ENCODE measurements at regions of chr1 and their contacts with region 1.

Region 1: DNA sequence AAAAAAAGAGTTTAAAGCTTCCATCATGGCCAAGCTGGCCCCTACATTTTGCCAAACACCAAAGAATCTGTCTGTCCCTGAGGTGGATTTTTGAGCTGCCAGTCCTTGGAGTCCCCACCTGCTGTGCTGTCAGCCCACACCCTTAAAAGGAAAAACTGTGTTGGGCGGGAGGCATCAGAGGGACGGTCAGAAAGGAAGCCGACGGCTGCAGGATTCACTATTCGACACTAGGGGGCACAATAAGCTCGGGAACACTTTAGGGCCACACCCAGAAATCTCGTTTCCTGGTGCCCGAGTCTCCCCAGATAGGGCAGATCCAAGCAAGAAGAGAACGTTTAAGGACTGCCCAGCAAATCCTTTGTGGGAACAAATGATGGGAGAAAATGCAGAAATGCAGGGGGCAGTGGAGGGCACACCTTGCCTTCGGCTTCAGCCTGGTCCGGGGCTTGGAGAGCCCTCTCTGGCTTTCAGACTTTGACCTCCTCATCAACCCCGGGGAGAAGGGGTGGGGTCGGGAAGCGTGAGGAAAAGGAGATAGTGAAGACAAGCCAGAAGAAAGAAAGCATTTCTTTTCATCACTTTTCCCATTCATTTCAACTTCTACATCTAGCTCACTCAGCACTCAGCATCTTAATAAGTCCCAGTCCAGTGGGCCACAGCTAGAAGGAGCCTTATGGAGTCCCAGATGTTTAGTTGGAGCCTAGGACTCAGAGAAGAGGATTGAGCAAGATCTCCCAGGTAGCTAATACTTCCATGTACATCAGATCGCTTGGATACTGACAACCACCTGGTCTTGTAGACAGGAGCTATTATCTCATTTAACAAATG is 5.0 kb upstream of the CTTNBP2NL start:
- DNase-seq: peak; percentile 91
- ATAC-seq: peak; percentile 88
- H3K4me3 Mint-ChIP-seq: peak overlapping the region; percentile 80
- H3K27ac Mint-ChIP-seq: no peak overlapping the region; the same call in 1 of the 2 replicates
- H3K4me1 Mint-ChIP-seq: peaks cover 38% of the 10 kb centered on the region
- H3K27me3 Mint-ChIP-seq: no peaks in the 10 kb centered on the region
- CTCF ChIP-seq: peak; percentile 87

Region 2: GRCh38 chr1:112346801-112347350 is 44.1 kb before region 1 on chr1:
- CTCF ChIA-PET with region 1: no interaction called
- POLR2A ChIA-PET with region 1: no interaction called
- DNase-seq: no peak
- ATAC-seq: no peak
- H3K4me3 Mint-ChIP-seq: no peak overlapping the region
- H3K27ac Mint-ChIP-seq: no peak overlapping the region
- H3K4me1 Mint-ChIP-seq: no peaks in the 10 kb centered on the region
- H3K27me3 Mint-ChIP-seq: no peaks in the 10 kb centered on the region; the same call in 1 of the 2 replicates
- CTCF ChIP-seq: no peak

Region 3: DNA sequence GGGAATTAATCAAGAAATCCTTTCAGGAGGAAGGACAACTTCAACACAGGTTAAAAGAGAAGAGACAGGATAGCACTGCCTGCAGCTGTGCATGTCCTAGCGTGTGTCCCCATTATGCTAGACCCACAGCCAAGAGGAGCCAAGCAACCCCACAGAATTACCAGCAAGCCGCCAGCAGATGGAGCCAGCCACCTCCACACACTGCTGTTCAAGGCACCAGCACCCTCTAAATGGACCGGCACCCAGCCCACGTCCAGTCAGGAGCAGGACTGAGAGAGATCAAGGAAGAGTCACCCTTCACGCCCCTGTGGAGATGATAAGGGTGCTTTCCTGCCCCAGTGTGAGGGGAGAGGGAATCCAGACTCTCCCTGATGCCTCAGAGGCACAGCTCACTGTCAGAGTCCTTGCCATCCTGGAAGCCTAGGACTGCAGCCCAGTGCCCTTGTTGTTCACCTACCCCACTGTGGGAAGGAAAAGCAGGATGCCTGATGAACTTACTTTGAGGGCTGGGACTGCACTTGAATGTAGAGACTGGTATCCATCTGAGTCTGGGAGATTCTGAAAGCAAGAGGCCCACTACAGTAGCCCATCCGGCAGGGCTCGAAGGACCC is 32.1 kb before region 1 on chr1:
- CTCF ChIA-PET with region 1: interaction called, 10 read pairs
- POLR2A ChIA-PET with region 1: no interaction called
- DNase-seq: peak; percentile 77
- ATAC-seq: peak; percentile 97
- H3K4me3 Mint-ChIP-seq: no peak overlapping the region
- H3K27ac Mint-ChIP-seq: no peak overlapping the region
- H3K4me1 Mint-ChIP-seq: peaks cover 18% of the 10 kb centered on the region
- H3K27me3 Mint-ChIP-seq: peaks cover 8% of the 10 kb centered on the region
- CTCF ChIP-seq: peak; percentile 60

Region 4: DNA sequence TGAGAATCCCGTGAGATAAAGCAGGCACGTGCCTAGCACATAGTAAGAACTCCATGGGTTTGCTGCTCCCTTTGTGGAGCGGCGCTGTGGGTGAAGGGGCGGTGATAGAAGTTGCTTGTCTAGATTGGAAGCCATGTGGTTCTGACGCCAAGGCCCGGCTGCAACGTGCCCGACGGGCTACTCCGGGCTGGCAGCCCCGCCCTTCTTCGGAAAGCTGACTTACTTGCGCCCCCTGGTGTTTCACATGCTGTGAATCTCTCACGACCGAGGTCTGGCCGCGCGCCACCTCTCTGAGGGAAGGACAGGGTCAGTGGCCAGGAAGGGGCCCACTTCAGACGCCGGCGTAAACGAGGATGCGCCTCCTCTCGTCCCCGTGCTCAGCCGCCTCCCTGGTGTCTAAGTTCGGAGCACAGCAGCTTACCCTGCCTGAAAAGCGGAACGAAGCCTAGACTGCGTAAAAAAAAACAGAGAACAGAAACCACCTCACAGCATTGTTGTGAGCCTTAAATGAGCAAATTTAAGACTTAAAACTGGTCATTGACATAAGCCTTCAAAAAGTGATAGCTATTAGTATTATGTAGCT is 75.2 kb after region 1 on chr1:
- CTCF ChIA-PET with region 1: interaction called, 80 read pairs
- POLR2A ChIA-PET with region 1: interaction called, 4 read pairs
- DNase-seq: peak; percentile 95
- ATAC-seq: peak; percentile 85
- H3K4me3 Mint-ChIP-seq: peak overlapping the region; percentile 63
- H3K27ac Mint-ChIP-seq: no peak overlapping the region
- H3K4me1 Mint-ChIP-seq: peaks cover 30% of the 10 kb centered on the region
- H3K27me3 Mint-ChIP-seq: peaks cover 24% of the 10 kb centered on the region
- CTCF ChIP-seq: peak; percentile 70

Region 5: DNA sequence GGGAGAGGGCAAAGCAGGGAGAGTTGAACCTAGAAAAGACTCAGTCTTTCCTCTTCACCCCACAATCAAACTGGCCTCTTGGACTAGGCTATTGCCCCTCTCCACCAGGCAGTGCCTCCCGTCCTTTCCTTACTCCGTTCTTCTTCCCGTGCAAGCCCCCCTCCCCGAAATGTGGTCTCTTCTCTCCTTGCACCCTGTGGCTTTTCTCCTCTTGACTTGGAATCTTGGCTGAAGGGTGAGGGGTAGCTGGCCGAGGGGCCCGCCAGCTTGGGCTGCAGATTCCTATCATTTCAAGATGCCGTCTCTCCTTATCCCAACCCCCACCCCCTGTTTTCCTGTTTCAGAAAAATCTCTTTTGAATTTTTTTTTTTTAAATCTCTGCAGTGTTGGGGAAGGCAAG is 119.4 kb after region 1 on chr1:
- CTCF ChIA-PET with region 1: interaction called, 13 read pairs
- POLR2A ChIA-PET with region 1: no interaction called
- DNase-seq: no peak
- ATAC-seq: no peak
- H3K4me3 Mint-ChIP-seq: peak overlapping the region; percentile 68
- H3K27ac Mint-ChIP-seq: no peak overlapping the region
- H3K4me1 Mint-ChIP-seq: peaks cover 18% of the 10 kb centered on the region
- H3K27me3 Mint-ChIP-seq: peaks cover 77% of the 10 kb centered on the region
- CTCF ChIP-seq: no peak

Region 6: DNA sequence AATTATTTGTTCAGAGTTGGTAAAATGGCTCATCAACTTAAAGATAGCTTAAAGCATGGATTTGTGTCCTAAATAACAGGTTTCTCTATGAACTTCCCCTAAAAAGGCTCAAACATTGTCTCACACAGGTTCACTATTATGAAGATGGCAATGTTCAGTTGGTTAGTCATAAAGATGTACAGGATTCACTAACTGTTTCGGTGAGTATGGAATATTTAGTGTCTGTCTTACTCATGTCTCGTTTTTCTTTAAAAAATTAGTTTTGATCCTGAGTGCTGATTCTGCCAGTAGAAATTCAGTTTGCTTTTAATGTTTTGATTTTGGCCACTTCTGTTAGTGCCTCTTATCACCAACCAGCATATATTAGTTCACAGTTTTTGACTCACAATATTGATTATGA is 276.0 kb after region 1 on chr1:
- CTCF ChIA-PET with region 1: interaction called, 5 read pairs
- POLR2A ChIA-PET with region 1: interaction called, 10 read pairs
- DNase-seq: no peak
- ATAC-seq: no peak
- H3K4me3 Mint-ChIP-seq: no peak overlapping the region
- H3K27ac Mint-ChIP-seq: no peak overlapping the region
- H3K4me1 Mint-ChIP-seq: peaks cover 26% of the 10 kb centered on the region
- H3K27me3 Mint-ChIP-seq: no peaks in the 10 kb centered on the region
- CTCF ChIP-seq: no peak

Region 7: DNA sequence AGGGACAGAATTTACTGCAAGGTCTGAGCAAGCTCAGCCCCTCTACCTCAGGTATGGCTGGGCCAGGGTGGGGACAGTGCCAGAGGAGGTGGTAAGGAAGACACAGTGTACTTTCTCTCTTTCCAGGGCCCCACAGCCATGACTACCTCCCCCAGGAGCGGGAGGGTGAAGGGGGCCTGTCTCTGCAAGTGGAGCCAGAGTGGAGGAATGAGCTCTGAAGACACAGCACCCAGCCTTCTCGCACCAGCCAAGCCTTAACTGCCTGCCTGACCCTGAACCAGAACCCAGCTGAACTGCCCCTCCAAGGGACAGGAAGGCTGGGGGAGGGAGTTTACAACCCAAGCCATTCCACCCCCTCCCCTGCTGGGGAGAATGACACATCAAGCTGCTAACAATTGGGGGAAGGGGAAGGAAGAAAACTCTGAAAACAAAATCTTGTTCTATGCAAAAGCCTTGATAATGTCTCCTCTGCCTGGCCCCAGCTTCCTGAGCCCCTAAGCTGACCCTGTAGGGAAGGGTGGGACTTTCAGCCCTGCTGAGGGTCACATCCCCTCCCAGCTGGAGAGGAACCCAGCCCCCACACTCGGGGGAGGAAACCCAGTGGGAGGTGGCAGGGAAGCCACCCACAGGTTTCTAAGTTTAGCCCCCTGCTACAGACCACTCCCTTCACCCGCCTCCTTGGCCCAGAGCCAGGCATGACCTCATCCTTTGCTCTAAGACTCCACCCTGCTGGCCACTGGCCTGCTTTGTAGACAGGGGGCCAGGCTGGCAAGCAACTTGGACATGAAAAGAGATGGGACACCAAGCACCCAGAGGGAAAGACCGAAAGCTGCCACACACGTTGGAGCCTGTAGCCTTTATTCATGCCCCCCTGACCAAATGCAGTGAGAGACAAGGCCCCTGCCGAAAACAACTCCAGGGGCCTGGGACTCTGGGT is 309.6 kb after region 1 on chr1:
- CTCF ChIA-PET with region 1: interaction called, 14 read pairs
- POLR2A ChIA-PET with region 1: interaction called, 6 read pairs
- DNase-seq: peak; percentile 77
- ATAC-seq: peak; percentile 45
- H3K4me3 Mint-ChIP-seq: peak overlapping the region; percentile 14; the same call in 1 of the 2 replicates
- H3K27ac Mint-ChIP-seq: no peak overlapping the region
- H3K4me1 Mint-ChIP-seq: peaks cover 79% of the 10 kb centered on the region
- H3K27me3 Mint-ChIP-seq: peaks cover 31% of the 10 kb centered on the region
- CTCF ChIP-seq: no peak

Region 8: DNA sequence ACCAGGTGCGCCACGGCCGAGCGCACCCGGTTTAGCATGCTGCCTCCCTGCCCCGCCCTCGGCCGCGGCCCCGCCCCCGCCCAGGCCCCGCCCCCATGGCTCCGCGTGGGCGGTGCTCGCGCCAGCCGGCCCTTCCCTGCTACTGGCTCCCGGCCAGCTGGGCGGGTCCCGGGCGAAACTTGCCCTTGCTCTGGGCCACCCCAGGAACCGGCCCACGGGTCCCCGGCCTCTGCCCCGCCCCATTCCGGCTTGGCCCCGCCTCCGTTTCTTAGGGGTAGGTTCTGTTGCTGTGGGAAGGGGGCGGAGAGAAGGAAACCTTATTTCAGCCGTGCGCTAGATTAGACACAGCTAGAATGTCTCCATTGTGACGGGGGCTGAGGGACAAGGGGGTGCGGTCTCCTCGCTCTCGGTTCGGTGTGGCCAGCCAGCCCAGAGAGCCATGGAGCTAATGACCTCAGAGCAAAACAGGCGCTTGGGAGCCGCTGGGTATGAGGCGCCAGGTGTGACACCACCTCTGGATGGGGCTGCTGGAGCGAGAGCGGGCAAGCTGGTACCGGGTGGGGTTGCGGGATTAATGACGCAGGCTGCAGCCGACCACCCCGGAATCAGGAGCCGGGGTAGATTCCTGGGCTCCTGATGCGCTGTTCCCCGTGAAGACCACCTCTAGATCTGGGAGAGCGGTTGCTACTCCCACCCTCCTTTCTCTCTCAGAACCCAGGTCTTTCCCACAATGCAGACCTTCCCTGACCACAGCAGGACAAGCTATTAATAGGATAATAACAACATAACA is 324.5 kb after region 1 on chr1 and contains the start of gene PPM1J:
- CTCF ChIA-PET with region 1: interaction called, 10 read pairs
- POLR2A ChIA-PET with region 1: interaction called, 6 read pairs
- DNase-seq: peak; percentile 100
- ATAC-seq: peak; percentile 85
- H3K4me3 Mint-ChIP-seq: peak within 1 kb of the TSS; percentile 81
- H3K27ac Mint-ChIP-seq: no peak within 1 kb of the TSS
- H3K4me1 Mint-ChIP-seq: peaks cover 50% of the 10 kb centered on the region
- H3K27me3 Mint-ChIP-seq: peaks cover 43% of the 10 kb centered on the region
- CTCF ChIP-seq: no peak
- total RNA-seq, gene PPM1J: 19.3 to 23.5 TPM (median 22.6 TPM) in 3 replicates

Measured in WTC11 (cell line).